Activated CD8-positive, alpha-beta memory T cell treated with anti-CD3 and anti-CD28 coated beads, Interleukin-2, amount 10 ng/mL, durations not matched to agents 7 days and 5 days (primary cell): ENCODE measurements at regions of chr3 and their contacts with region 1.

Region 1: DNA sequence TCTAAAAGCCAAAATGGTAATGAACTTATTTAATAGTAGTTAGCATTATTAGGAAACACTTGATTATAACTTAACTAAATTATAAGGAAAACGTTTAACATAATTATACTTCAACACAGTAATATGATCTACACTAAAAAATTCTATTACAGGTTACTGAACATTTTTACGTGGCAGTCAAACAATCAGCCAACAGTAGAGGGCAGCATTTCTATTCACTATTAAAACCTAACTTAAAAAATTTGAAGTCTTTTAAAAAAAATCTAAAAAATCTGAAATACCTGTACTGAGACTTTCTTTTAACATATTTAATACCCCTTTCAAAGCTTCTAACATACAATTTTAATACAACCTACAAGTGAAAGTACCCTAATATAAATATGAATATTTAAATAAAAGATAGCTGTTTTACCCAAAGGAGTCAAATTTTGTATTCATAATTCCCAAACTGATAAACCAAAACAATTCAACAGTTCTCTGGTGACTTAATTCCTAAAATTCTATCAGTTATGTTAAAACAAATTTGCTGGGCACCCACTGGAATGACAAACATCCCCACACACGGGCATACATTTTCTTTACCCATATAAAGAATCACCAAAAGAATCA is 41.5 kb downstream of the DLG1 start:
- DNase-seq: peak; percentile 42
- ATAC-seq: no peak
- H3K4me3 Mint-ChIP-seq: no peak overlapping the region
- H3K27ac Mint-ChIP-seq: no peak overlapping the region
- H3K4me1 Mint-ChIP-seq: peaks cover 16% of the 10 kb centered on the region
- H3K27me3 Mint-ChIP-seq: no peaks in the 10 kb centered on the region

Region 2: DNA sequence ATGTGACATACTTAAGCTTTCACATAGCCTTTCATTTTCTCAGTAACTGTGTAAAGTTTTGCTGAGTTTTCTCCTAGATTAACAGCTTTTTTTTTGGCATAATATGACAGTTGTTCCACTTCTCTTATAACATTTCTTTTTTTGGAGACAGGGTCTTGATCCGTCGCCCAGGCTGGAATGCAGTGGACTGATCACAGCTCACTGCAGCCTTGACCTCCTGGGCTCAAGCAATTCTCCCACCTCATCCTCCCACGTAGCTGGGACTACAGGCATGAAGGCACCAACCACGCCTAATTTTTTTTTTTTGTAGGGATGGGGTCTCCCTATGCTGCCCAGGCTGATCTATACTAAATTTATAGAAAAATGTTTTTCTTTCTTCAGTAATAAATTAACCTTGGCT is 11.4 kb after region 1 on chr3:
- CTCF ChIA-PET with region 1: interaction called, 22 read pairs
- DNase-seq: no peak
- ATAC-seq: no peak
- H3K4me3 Mint-ChIP-seq: no peak overlapping the region
- H3K27ac Mint-ChIP-seq: no peak overlapping the region
- H3K4me1 Mint-ChIP-seq: peaks cover 4% of the 10 kb centered on the region
- H3K27me3 Mint-ChIP-seq: no peaks in the 10 kb centered on the region

Region 3: GRCh38 chr3:197298341-197298857 is 41.5 kb after region 1 on chr3 and contains the start of gene DLG1:
- CTCF ChIA-PET with region 1: interaction called, 10 read pairs
- DNase-seq: peak; percentile 90
- ATAC-seq: peak; percentile 77
- H3K4me3 Mint-ChIP-seq: peak within 1 kb of the TSS; percentile 91
- H3K27ac Mint-ChIP-seq: peak within 1 kb of the TSS; percentile 87
- H3K4me1 Mint-ChIP-seq: peaks cover 22% of the 10 kb centered on the region
- H3K27me3 Mint-ChIP-seq: peaks cover 32% of the 10 kb centered on the region
- total RNA-seq, gene DLG1: 62.0 to 80.3 TPM

Region 4: DNA sequence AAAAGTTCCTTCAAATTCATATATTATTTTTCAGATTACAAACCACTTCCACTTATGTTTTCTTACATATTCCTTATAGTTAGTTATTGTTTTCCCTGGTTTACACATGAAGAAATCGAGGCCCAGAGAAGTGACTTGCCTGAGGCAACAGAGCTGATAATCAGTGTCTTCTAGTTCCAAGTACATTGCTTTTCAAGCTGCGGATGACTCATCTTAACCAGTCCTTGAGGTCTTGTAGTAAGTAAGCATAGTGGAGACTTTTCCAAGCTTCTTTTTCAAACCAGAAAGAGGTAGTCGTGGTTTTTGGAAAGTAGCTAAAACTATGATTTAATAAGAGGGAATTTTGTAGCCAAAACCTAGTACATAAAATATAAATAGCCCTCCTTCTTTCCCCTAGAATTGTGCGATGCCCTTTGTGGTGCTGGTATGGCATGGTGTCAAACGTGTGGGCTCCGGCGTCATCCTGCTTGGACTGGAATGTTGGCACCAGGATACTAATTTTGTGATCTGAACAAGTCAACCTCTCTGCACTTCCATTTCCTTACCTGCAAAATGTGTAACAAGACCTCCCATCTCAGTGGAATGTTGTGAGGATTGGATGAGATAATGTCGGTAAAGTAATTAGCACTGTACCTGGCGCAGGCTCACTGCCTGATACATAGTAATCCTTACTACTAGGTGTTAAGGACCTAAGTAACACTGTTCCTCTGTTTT is 60.5 kb after region 1 on chr3:
- CTCF ChIA-PET with region 1: no interaction called
- DNase-seq: no peak
- ATAC-seq: no peak
- H3K4me3 Mint-ChIP-seq: no peak overlapping the region
- H3K27ac Mint-ChIP-seq: no peak overlapping the region
- H3K4me1 Mint-ChIP-seq: no peaks in the 10 kb centered on the region
- H3K27me3 Mint-ChIP-seq: peaks cover 70% of the 10 kb centered on the region

Region 5: GRCh38 chr3:197456261-197457091 is 199.5 kb after region 1 on chr3:
- CTCF ChIA-PET with region 1: interaction called, 56 read pairs
- DNase-seq: peak; percentile 66
- ATAC-seq: peak; percentile 69
- H3K4me3 Mint-ChIP-seq: peak overlapping the region; percentile 81
- H3K27ac Mint-ChIP-seq: peak overlapping the region; percentile 58
- H3K4me1 Mint-ChIP-seq: peaks cover 13% of the 10 kb centered on the region
- H3K27me3 Mint-ChIP-seq: peaks cover 29% of the 10 kb centered on the region

Region 6: GRCh38 chr3:197511130-197511529 is 254.2 kb after region 1 on chr3:
- CTCF ChIA-PET with region 1: interaction called, 20 read pairs
- DNase-seq: no peak
- ATAC-seq: no peak
- H3K4me3 Mint-ChIP-seq: no peak overlapping the region
- H3K27ac Mint-ChIP-seq: no peak overlapping the region
- H3K4me1 Mint-ChIP-seq: peaks cover 3% of the 10 kb centered on the region
- H3K27me3 Mint-ChIP-seq: no peaks in the 10 kb centered on the region